CD4-positive, alpha-beta memory T cell (primary cell): ENCODE measurements at regions of chr6 and their contacts with region 1.

Region 1: GRCh38 chr6:11172501-11173332 is 59.8 kb downstream of the NEDD9 start:
- DNase-seq: peak; percentile 56 to 72 (median 65)
- H3K4me3 ChIP-seq: peak overlapping the region in 1 of 2 donors; percentile 9
- H3K4me3 Mint-ChIP-seq: peak overlapping the region; percentile 16 to 78 (median 64)
- H3K27ac ChIP-seq: no peak overlapping the region
- H3K27ac Mint-ChIP-seq: peak overlapping the region in 4 of 7 donors; percentile 3 to 65 (median 30)
- H3K4me1 ChIP-seq: peaks cover 12% of the 10 kb centered on the region
- H3K4me1 Mint-ChIP-seq: peaks cover 9 to 20% (median 10%) of the 10 kb centered on the region in 4 donors
- H3K27me3 ChIP-seq: no peaks in the 10 kb centered on the region
- H3K27me3 Mint-ChIP-seq: no peaks in the 10 kb centered on the region

Region 2: GRCh38 chr6:10999994-11000393 is 172.7 kb before region 1 on chr6:
- CTCF ChIA-PET with region 1: no interaction called
- POLR2A ChIA-PET with region 1: no interaction called
- intact Hi-C with region 1: no loop called
- DNase-seq: no peak
- H3K4me3 ChIP-seq: no peak overlapping the region
- H3K4me3 Mint-ChIP-seq: no peak overlapping the region
- H3K27ac ChIP-seq: no peak overlapping the region
- H3K27ac Mint-ChIP-seq: no peak overlapping the region
- H3K4me1 ChIP-seq: no peaks in the 10 kb centered on the region
- H3K4me1 Mint-ChIP-seq: no peaks in the 10 kb centered on the region
- H3K27me3 ChIP-seq: no peaks in the 10 kb centered on the region
- H3K27me3 Mint-ChIP-seq: peaks cover 3 to 5% of the 10 kb centered on the region in 2 donors

Region 3: DNA sequence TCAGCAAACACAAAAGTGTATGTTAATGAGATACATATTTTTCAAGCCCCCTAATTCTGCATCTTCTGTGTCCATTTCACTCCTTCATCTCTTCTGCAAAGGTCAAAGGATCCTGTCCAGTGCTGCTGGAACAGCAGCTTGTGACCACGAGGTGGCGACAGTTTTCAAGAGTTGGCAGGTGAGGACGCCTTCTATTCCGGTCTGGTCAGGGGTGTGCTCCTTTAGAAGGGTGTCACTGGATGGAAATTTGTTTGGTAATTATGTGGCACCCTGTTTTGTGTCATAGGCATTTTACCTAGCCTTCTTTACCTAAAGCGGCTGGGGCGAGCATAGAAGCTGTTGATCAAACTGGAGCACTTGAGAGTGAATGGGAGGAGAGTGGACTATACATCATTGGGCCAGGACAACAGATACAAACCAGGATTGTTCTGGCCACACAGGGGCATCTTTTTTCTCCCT is 28.3 kb before region 1 on chr6:
- CTCF ChIA-PET with region 1: interaction called, 21 read pairs
- POLR2A ChIA-PET with region 1: no interaction called
- intact Hi-C with region 1: loop called (anchors 1 kb)
- DNase-seq: peak; percentile 54 to 68 (median 64)
- H3K4me3 ChIP-seq: no peak overlapping the region
- H3K4me3 Mint-ChIP-seq: no peak overlapping the region
- H3K27ac ChIP-seq: no peak overlapping the region
- H3K27ac Mint-ChIP-seq: no peak overlapping the region
- H3K4me1 ChIP-seq: no peaks in the 10 kb centered on the region
- H3K4me1 Mint-ChIP-seq: peaks cover 0 to 4% (median 0%) of the 10 kb centered on the region in 4 donors
- H3K27me3 ChIP-seq: no peaks in the 10 kb centered on the region
- H3K27me3 Mint-ChIP-seq: no peaks in the 10 kb centered on the region

Region 4: DNA sequence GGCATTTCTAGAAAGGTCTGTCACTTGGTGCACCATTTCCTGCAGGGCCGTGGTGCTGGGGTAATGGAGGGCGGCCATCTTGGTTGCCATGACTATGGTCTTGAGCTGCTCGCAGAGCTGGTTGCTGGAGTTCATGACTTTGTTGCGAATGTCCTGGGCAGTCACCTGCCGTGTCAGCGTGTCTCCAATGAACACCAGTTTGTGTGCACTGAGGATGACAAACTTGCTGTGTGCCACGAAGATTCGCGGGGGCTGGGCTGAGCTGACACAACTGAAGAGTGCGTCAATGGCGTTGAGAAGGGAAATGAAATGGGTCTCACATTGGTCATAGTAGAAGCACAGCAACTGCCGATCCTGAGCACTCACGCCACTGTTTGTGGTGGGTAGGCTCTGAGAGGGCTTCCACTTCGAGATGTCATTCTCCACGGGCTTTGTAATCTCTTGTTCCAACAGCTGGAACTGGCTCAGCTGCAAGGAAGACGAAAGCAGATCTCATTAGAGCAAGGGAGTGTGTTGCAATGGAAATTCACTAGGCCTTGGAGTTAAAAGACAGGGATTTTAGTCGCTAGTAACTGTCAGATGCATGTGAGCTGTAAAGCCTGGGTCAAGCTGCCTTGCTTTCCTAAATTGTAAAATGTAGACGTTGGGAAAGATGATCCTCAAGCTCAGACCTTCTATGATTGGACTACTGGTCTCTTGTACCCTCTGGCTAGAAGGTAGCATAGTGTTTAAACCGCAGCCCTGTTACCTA is 12.7 kb after region 1 on chr6:
- CTCF ChIA-PET with region 1: interaction called, 12 read pairs
- POLR2A ChIA-PET with region 1: no interaction called
- intact Hi-C with region 1: no loop called
- DNase-seq: no peak
- H3K4me3 ChIP-seq: no peak overlapping the region
- H3K4me3 Mint-ChIP-seq: no peak overlapping the region
- H3K27ac ChIP-seq: no peak overlapping the region
- H3K27ac Mint-ChIP-seq: peak overlapping the region in 1 of 7 donors; percentile 79
- H3K4me1 ChIP-seq: no peaks in the 10 kb centered on the region
- H3K4me1 Mint-ChIP-seq: peaks cover 0 to 2% (median 0%) of the 10 kb centered on the region in 4 donors
- H3K27me3 ChIP-seq: no peaks in the 10 kb centered on the region
- H3K27me3 Mint-ChIP-seq: no peaks in the 10 kb centered on the region

Region 5: DNA sequence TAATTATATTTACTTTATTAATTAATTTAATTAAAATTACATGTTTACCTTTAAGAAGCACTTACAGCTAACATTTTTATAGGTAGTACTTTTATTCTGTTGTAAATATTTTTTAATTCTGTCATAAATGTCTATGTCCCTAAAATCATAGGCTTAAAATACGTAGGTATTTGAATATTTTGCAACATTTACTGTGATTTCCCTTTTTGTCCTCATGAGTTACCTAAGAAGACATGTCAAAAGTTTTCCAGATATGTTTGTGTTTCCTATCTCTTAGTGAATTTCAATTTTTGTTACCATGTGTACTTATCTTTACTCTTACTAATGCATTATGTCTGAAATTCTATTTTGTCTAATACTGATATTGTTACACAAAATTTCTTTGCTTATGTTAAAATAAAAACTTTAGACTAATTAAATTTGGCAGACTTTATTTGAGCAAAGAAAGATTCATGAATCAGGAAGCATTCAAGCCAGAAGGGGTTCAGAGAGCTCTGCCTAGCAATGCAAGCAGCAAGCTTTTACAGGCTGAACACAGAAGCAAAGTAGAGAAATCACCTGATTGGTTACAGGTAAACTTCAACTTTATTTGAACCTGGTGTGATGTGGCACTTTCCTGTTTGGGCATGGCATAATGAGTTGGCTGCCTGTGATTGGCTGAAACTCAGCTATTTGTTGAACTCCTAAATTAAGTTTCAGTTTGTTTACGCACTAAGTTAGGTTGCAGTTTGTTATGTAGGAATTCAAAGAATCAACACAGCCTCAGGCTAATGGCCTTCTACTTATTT is 241.7 kb after region 1 on chr6:
- CTCF ChIA-PET with region 1: interaction called, 29 read pairs
- POLR2A ChIA-PET with region 1: no interaction called
- intact Hi-C with region 1: loop called (anchors 1 kb)
- DNase-seq: peak; percentile 68 to 81 (median 77)
- H3K4me3 ChIP-seq: no peak overlapping the region
- H3K4me3 Mint-ChIP-seq: peak overlapping the region; percentile 30 to 71 (median 64)
- H3K27ac ChIP-seq: no peak overlapping the region
- H3K27ac Mint-ChIP-seq: peak overlapping the region; percentile 17 to 93 (median 78)
- H3K4me1 ChIP-seq: peaks cover 34% of the 10 kb centered on the region
- H3K4me1 Mint-ChIP-seq: peaks cover 19 to 37% (median 25%) of the 10 kb centered on the region in 4 donors
- H3K27me3 ChIP-seq: no peaks in the 10 kb centered on the region
- H3K27me3 Mint-ChIP-seq: no peaks in the 10 kb centered on the region

Region 6: DNA sequence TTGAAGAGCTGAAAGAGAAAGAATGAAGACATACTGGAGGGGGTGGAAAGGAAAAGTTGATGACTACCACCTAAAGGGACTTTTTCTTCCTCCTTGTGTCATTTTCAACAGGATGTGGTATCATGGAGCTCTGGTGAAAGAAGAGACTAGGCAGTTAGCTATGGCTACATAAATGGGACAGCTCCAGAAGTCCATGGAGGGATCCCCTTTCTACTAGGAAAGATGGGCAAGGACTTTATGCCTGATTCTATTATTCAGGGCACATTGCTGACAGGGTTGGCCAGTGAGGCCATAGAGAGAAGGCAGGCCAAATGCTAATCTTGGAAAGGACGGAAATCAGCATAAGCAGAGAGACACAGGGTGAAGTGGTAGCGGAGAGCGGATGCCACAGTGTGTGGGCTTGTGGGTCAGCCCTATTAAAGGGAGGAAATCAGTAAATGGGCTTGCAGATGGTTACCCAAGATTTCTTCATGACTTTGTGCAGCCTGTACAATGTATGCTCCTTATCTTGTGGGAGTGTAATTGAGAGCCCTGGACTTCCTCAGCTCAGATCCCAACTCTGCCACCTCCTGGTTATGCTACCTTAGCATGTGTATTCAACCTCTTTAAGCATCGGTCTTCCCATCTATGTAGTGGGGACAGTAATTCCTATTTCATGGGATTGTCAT is 287.4 kb after region 1 on chr6:
- CTCF ChIA-PET with region 1: interaction called, 8 read pairs
- POLR2A ChIA-PET with region 1: no interaction called
- intact Hi-C with region 1: loop called (anchors 1 kb)
- DNase-seq: peak in 3 of 5 donors; percentile 5 to 10 (median 9)
- H3K4me3 ChIP-seq: no peak overlapping the region
- H3K4me3 Mint-ChIP-seq: peak overlapping the region in 6 of 8 donors; percentile 1 to 57 (median 31)
- H3K27ac ChIP-seq: no peak overlapping the region
- H3K27ac Mint-ChIP-seq: peak overlapping the region in 4 of 7 donors; percentile 2 to 53 (median 12)
- H3K4me1 ChIP-seq: peaks cover 19% of the 10 kb centered on the region
- H3K4me1 Mint-ChIP-seq: peaks cover 16 to 25% (median 22%) of the 10 kb centered on the region in 4 donors
- H3K27me3 ChIP-seq: no peaks in the 10 kb centered on the region
- H3K27me3 Mint-ChIP-seq: no peaks in the 10 kb centered on the region

Region 7: DNA sequence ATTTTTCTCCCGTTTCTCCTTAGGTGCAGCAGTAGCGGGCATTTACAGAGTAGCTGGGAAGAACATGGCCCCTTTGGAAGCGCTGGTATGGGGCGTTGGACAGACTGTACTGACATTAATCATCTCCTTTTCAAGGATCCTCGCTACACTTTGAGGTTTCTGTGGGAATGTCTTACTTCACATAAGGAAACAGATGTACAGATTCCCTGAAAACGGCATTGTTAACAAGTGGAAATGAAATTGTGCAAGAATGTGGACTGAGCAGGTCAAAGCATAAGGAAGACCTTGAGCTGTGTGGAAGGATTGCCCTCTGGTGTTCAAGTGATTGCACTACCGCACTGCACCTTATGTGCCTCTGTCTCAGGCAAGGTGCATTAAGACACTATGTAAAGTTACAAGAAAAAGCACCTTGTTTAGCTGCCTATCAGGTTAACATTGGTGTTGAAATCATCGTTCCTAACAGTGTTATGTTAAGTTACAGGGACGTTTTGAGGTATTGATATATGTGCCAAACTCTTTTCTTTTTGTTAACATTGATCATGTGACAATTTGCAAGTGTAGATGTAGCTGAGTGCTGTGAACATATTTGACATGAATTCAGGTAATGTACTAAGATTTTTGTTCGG is 402.8 kb after region 1 on chr6:
- CTCF ChIA-PET with region 1: interaction called, 10 read pairs
- POLR2A ChIA-PET with region 1: no interaction called
- intact Hi-C with region 1: loop called (anchors 1 kb)
- DNase-seq: peak in 4 of 5 donors; percentile 39 to 43 (median 40)
- H3K4me3 ChIP-seq: no peak overlapping the region
- H3K4me3 Mint-ChIP-seq: no peak overlapping the region
- H3K27ac ChIP-seq: no peak overlapping the region
- H3K27ac Mint-ChIP-seq: no peak overlapping the region
- H3K4me1 ChIP-seq: no peaks in the 10 kb centered on the region
- H3K4me1 Mint-ChIP-seq: no peaks in the 10 kb centered on the region
- H3K27me3 ChIP-seq: no peaks in the 10 kb centered on the region
- H3K27me3 Mint-ChIP-seq: no peaks in the 10 kb centered on the region